ENCODE measurements at regions of chr22 and their contacts with region 1.

Region 1: GRCh38 chr22:24423519-24424000 is 3.8 kb upstream of the ADORA2A start:
- DNase-seq: peak in 2 of 3 donors; percentile 75
- ATAC-seq: peak; percentile 44 to 74 (median 54)
- H3K4me3 ChIP-seq: peak overlapping the region; percentile 58 to 65 (median 59)
- H3K27ac ChIP-seq: peak overlapping the region in 2 of 3 donors; percentile 59 to 82
- H3K4me1 ChIP-seq: peaks cover 0 to 18% (median 0%) of the 10 kb centered on the region in 4 donors
- H3K27me3 ChIP-seq: no peaks in the 10 kb centered on the region
- CTCF ChIP-seq: peak; percentile 89 to 94 (median 91)
- POLR2A ChIP-seq: no peak

Region 2: DNA sequence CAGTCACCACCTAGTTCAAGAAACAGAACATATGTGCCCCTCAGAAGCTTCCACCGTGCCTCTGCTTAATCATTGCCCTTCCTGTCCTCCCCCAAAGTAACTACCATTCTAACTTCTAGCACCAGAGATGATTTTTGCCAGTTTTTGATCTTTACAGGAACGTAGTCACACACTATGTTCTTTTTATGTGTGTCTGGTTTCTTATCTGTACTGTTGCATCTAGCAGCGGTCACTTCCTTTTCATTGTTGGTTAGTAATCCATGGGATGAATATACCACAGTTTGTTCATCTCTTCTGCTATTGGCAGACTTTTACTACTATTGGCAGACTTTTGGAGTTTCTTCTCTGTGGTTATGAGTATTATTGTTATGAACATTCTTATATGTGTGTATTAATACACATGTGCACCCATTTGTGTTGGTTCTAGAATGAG is 118.3 kb before region 1 on chr22:
- intact Hi-C with region 1: no loop called
- DNase-seq: no peak
- ATAC-seq: no peak
- H3K4me3 ChIP-seq: no peak overlapping the region
- H3K27ac ChIP-seq: peak overlapping the region in 1 of 3 donors; percentile 25
- H3K4me1 ChIP-seq: peaks cover 0 to 36% (median 14%) of the 10 kb centered on the region in 4 donors
- H3K27me3 ChIP-seq: no peaks in the 10 kb centered on the region
- CTCF ChIP-seq: no peak
- POLR2A ChIP-seq: no peak

Region 3: GRCh38 chr22:24355574-24355973 is 68.0 kb before region 1 on chr22:
- intact Hi-C with region 1: no loop called
- DNase-seq: no peak
- ATAC-seq: no peak
- H3K4me3 ChIP-seq: no peak overlapping the region
- H3K27ac ChIP-seq: no peak overlapping the region
- H3K4me1 ChIP-seq: peaks cover 0 to 23% (median 2%) of the 10 kb centered on the region in 4 donors
- H3K27me3 ChIP-seq: no peaks in the 10 kb centered on the region
- CTCF ChIP-seq: no peak
- POLR2A ChIP-seq: no peak

Region 4: GRCh38 chr22:24482575-24482974 is 59.0 kb after region 1 on chr22:
- intact Hi-C with region 1: loop called in 1 of 2 experiments (anchors 10 kb)
- DNase-seq: no peak
- ATAC-seq: peak; percentile 64 to 70 (median 68)
- H3K4me3 ChIP-seq: no peak overlapping the region
- H3K27ac ChIP-seq: peak overlapping the region; percentile 46 to 79 (median 62)
- H3K4me1 ChIP-seq: peaks cover 0 to 72% (median 27%) of the 10 kb centered on the region in 4 donors
- H3K27me3 ChIP-seq: no peaks in the 10 kb centered on the region
- CTCF ChIP-seq: no peak
- POLR2A ChIP-seq: no peak

Measured in right lobe of liver (tissue), 6 donors.